ENCODE measurements at regions of chr15 and their contacts with region 1.

Region 1: DNA sequence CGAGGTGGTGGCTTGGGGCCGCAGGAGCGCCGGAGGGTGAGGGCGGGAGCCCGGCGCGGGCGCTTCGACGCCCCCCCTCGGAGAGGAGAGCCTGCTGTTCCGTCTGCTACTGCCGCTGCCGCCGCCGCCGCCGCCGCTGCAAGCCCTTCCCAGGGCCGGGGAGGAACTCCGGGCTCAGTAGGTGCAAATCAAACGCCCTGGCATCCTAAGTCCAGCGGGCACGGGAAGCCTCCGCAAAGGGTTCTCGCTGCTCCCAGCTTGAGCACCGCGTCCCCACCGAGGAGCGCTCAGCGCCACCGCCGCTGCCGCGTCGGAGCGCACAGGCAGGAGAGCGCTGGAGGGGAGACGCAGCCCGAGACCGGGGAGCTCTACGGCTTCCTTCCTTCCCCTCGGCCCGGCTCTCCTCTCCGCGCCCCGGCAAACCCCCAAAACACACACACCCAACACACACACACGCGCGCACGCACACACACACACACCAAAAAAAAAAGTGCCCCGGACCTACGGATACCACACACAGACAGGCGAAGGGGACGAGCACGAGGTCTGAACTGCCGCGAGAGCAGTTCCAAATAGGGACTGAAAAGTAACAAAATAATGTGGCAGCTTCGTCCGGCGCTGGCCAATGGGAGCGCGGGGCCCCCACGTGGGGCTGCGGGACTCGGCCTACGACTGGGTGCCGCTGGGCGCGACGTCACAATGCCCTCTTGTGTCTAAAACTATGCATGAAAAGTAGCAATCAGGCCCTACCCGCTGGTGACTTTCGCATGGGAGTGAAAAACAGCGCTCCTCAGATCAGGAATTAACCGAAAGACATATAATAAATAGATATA is at the start of gene TLE3:
- DNase-seq: peak; percentile 96
- ATAC-seq: peak; percentile 57
- H3K4me3 ChIP-seq: peak within 1 kb of the TSS; percentile 83 to 88 (median 84)
- H3K27ac ChIP-seq: peak within 1 kb of the TSS; percentile 95
- H3K4me1 ChIP-seq: peaks cover 68% of the 10 kb centered on the region
- H3K27me3 ChIP-seq: peaks cover 2 to 10% of the 10 kb centered on the region in 2 experiments; a peak in 4 of 5 replicates
- CTCF ChIP-seq: peak; percentile 50
- EP300 ChIP-seq: no peak
- POLR2A ChIP-seq: peak; percentile 76 to 78
- RAD21 ChIP-seq: no peak; the same call in 1 of the 2 replicates
- total RNA-seq, gene TLE3: 11.9 TPM in 2 replicates

Region 2: GRCh38 chr15:69462493-69463181 is 634.9 kb before region 1 on chr15:
- CTCF ChIA-PET with region 1: no interaction called
- POLR2A ChIA-PET with region 1: interaction called, 4 read pairs
- in situ Hi-C with region 1: loop called (anchors 25 kb)
- intact Hi-C with region 1: no loop called
- DNase-seq: peak; percentile 96
- ATAC-seq: peak; percentile 89
- H3K4me3 ChIP-seq: peak overlapping the region; percentile 54 to 81 (median 79)
- H3K27ac ChIP-seq: peak overlapping the region; percentile 86
- H3K4me1 ChIP-seq: peaks cover 32% of the 10 kb centered on the region
- H3K27me3 ChIP-seq: peaks cover 0 to 5% of the 10 kb centered on the region in 2 experiments; a peak in 3 of 5 replicates
- CTCF ChIP-seq: peak; percentile 93
- EP300 ChIP-seq: no peak
- POLR2A ChIP-seq: peak; percentile 78 to 83
- RAD21 ChIP-seq: no peak

Region 3: GRCh38 chr15:69593981-69594966 is 503.3 kb before region 1 on chr15:
- CTCF ChIA-PET with region 1: no interaction called
- POLR2A ChIA-PET with region 1: no interaction called
- in situ Hi-C with region 1: no loop called
- intact Hi-C with region 1: loop called (anchors 5 kb)
- DNase-seq: peak; percentile 98
- ATAC-seq: peak; percentile 91
- H3K4me3 ChIP-seq: no peak overlapping the region
- H3K27ac ChIP-seq: no peak overlapping the region
- H3K4me1 ChIP-seq: peaks cover 36% of the 10 kb centered on the region
- H3K27me3 ChIP-seq: peaks cover 22 to 82% of the 10 kb centered on the region in 2 experiments; a peak in 4 of 5 replicates
- CTCF ChIP-seq: no peak
- EP300 ChIP-seq: peak; percentile 84 to 92
- POLR2A ChIP-seq: no peak
- RAD21 ChIP-seq: no peak; the same call in 1 of the 2 replicates

Region 4: DNA sequence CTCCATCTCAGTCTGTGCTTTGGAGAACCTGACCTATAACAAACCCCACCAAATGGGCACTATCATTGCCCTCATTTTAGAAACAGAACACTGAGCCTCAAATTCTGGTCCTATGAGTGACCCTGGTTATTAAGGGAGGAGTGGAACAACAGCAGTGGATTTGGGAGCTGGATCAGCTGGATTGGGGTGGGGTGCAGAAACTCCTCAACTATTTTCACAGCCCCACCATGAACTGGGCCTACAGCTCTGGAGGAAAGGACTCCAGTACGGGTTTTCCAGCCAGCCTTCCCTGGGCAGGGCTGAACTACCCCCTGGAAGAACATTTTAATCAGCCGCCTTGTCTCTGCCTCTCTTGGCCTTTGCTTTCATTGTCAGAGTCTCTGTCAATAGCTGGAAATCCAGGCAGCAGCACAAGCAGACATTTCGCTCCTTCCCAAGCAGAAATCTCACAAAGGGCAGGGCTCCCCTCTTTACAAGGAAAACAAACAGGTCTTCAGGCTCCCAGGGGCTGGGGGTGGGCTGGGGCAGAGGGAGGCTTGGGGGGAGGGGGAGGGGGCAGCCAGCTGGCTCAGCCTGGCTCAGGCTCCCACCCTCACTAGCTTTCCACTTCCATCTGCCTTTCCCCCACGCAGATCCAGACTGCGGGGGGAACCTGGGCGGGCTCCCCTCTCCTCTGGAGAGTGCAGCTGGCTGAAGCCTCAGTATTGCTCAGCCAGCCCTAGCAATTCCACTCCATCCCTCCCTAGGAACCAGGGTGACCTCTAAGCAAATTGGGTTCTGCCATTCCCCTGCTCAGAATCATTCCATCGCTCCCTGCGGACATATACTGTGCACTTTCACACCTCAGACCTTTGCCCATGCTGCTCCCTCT is 13.9 kb after region 1 on chr15:
- CTCF ChIA-PET with region 1: no interaction called
- POLR2A ChIA-PET with region 1: interaction called, 9 read pairs
- in situ Hi-C with region 1: no loop called
- intact Hi-C with region 1: loop called (anchors 1 kb)
- DNase-seq: no peak
- ATAC-seq: peak; percentile 86
- H3K4me3 ChIP-seq: no peak overlapping the region
- H3K27ac ChIP-seq: no peak overlapping the region
- H3K4me1 ChIP-seq: peaks cover 12% of the 10 kb centered on the region
- H3K27me3 ChIP-seq: peaks cover 8 to 59% of the 10 kb centered on the region in 2 experiments; a peak in 4 of 5 replicates
- CTCF ChIP-seq: no peak
- EP300 ChIP-seq: peak in 1 of 2 experiments; percentile 40; a peak in 1 of 4 replicates
- POLR2A ChIP-seq: no peak
- RAD21 ChIP-seq: no peak

Region 5: GRCh38 chr15:70140543-70141375 is 43.2 kb after region 1 on chr15:
- CTCF ChIA-PET with region 1: no interaction called
- POLR2A ChIA-PET with region 1: interaction called, 64 read pairs
- in situ Hi-C with region 1: no loop called
- intact Hi-C with region 1: loop called (anchors 2 kb)
- DNase-seq: peak; percentile 94
- ATAC-seq: peak; percentile 95
- H3K4me3 ChIP-seq: peak overlapping the region in 2 of 3 experiments; percentile 0 to 14; a peak in 2 of 6 replicates
- H3K27ac ChIP-seq: no peak overlapping the region
- H3K4me1 ChIP-seq: peaks cover 23% of the 10 kb centered on the region
- H3K27me3 ChIP-seq: peaks cover 10 to 88% of the 10 kb centered on the region in 2 experiments
- CTCF ChIP-seq: no peak
- EP300 ChIP-seq: peak; percentile 92 to 97
- POLR2A ChIP-seq: no peak
- RAD21 ChIP-seq: 0 out of 2 replicates have a peak, but pooled peaks have one; percentile 14